ENCODE measurements at regions of chr2 and their contacts with region 1.

Region 1: GRCh38 chr2:75292826-75293225 is 93.5 kb upstream of the TACR1 start:
- DNase-seq: no peak
- H3K4me3 Mint-ChIP-seq: no peak overlapping the region
- H3K27ac Mint-ChIP-seq: peak overlapping the region; percentile 13
- H3K4me1 Mint-ChIP-seq: peaks cover 28% of the 10 kb centered on the region
- H3K27me3 Mint-ChIP-seq: no peaks in the 10 kb centered on the region
- CTCF ChIP-seq: no peak

Region 2: DNA sequence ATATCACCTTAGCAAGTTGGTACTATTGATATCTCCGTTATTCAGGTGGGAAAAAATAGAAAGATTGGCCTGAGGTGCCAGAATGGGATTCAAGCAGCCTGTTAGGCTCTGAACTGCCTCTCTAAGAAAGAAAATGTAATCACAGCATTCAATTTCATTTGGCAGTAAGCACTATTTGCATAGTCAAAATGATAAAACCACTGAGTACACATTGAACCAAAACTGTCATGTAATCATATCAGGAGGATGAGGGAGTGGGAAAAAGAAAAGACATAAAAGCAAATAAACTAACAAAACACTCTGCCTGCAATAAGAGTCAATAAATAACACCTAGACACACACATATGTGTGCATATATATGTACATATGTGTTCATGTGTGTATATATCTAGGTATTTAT is 10.4 kb after region 1 on chr2:
- CTCF ChIA-PET with region 1: no interaction called
- intact Hi-C with region 1: loop called (anchors 1 kb)
- DNase-seq: no peak
- H3K4me3 Mint-ChIP-seq: no peak overlapping the region
- H3K27ac Mint-ChIP-seq: no peak overlapping the region
- H3K4me1 Mint-ChIP-seq: peaks cover 26% of the 10 kb centered on the region
- H3K27me3 Mint-ChIP-seq: no peaks in the 10 kb centered on the region
- CTCF ChIP-seq: no peak